Heart right ventricle (tissue), 16 donors: ENCODE measurements at regions of chr9 and their contacts with region 1.

Region 1: DNA sequence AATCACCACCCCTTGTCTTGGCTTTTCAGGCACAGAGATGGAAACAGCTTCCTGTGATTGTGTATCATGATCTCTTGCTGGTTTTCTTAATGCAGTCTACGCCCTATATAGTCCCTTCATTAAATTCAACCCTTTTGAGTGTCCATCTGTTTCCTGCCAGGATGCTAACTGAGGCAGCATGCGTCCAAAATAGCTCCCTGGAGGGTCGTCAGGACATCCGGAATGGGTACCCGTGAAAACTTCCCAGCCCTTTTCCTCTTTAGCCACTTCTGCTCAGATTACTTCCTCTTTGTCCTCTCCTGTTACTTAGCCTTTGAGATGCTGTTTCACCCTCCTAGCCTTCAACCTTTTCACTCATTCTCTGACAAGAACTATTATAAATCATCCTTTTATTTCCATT is 79.8 kb upstream of the KLF9 start:
- DNase-seq: peak in 1 of 2 donors; percentile 40
- ATAC-seq: peak in 7 of 8 donors; percentile 36 to 71 (median 46)
- H3K4me3 ChIP-seq: no peak overlapping the region
- H3K27ac ChIP-seq: peak overlapping the region in 9 of 10 donors; percentile 9 to 75 (median 55)
- H3K4me1 ChIP-seq: peaks cover 15 to 55% (median 41%) of the 10 kb centered on the region in 9 donors
- H3K27me3 ChIP-seq: no peaks in the 10 kb centered on the region
- CTCF ChIP-seq: no peak

Region 2: DNA sequence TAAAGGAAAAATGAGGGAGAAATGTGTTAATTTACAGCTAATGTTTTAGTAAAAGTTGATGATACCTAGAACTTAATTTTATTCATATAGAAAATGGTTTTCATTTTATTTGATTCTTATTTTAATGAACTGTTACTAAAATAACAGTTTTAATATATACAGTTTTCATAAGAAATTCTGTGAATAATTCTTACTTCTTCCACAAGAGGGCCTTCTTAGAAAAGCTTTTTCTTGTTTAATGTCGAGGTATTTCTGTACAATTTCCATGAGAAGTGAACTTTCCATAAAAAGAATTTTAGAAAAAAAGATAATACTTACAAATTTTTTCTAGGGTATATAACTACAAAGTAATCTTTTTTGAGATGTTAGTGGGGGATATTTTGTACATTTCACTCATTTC is 153.6 kb before region 1 on chr9:
- intact Hi-C with region 1: loop called in 1 of 10 experiments (anchors 5 kb)
- DNase-seq: no peak
- ATAC-seq: no peak
- H3K4me3 ChIP-seq: no peak overlapping the region
- H3K27ac ChIP-seq: no peak overlapping the region
- H3K4me1 ChIP-seq: peaks cover 0 to 8% (median 0%) of the 10 kb centered on the region in 9 donors
- H3K27me3 ChIP-seq: no peaks in the 10 kb centered on the region
- CTCF ChIP-seq: peak in 7 of 9 donors; percentile 48 to 71 (median 66)

Region 3: GRCh38 chr9:70352802-70353201 is 141.4 kb before region 1 on chr9:
- intact Hi-C with region 1: loop called in 7 of 10 experiments (anchors 5 to 10 kb)
- DNase-seq: no peak
- ATAC-seq: peak in 2 of 8 donors; percentile 36 to 57
- H3K4me3 ChIP-seq: no peak overlapping the region
- H3K27ac ChIP-seq: peak overlapping the region in 2 of 10 donors; percentile 3 to 16
- H3K4me1 ChIP-seq: peaks cover 0 to 33% (median 10%) of the 10 kb centered on the region in 9 donors
- H3K27me3 ChIP-seq: no peaks in the 10 kb centered on the region
- CTCF ChIP-seq: peak; percentile 48 to 89 (median 73)

Region 4: DNA sequence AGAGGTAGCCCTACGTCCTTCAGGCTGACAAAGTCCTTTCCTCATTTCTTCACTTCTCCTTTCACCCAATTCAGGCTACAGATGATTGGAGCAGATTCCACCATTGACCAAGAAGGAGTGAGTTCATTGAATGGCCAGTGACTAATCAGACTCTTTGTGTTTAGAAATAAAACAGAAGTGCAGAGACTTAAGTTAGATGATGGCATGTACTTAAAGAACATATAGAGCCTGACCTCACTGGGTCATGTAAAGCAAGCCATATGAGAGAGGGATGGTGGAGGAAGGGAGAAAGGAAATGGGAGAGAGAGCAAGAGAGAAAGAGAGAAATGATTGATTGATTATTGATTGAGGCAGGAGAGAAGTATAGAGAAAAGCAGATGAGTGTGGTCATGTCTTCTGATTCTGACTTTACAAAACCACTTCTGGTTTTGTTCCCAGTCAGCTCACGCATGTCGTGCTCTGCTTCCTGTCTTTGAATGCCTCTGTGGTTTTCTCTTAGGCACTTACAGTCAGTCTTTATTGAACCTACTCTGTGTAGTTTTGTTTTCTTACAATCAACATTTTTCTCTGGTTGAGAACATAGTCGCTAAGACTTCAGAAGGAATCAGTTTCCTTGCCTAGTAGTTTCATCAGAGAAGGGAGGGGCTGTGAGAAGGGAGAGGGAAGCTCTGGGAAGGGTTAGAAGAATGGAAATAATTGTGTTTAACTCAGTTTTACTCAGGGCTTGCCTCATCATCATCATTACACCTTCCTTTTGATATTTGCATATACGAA is 69.4 kb after region 1 on chr9:
- intact Hi-C with region 1: loop called in 1 of 10 experiments (anchors 10 kb)
- DNase-seq: no peak
- ATAC-seq: peak in 7 of 8 donors; percentile 32 to 79 (median 66)
- H3K4me3 ChIP-seq: no peak overlapping the region
- H3K27ac ChIP-seq: peak overlapping the region in 6 of 10 donors; percentile 1 to 91 (median 24)
- H3K4me1 ChIP-seq: peaks cover 0 to 39% (median 0%) of the 10 kb centered on the region in 9 donors
- H3K27me3 ChIP-seq: no peaks in the 10 kb centered on the region
- CTCF ChIP-seq: no peak

Region 5: DNA sequence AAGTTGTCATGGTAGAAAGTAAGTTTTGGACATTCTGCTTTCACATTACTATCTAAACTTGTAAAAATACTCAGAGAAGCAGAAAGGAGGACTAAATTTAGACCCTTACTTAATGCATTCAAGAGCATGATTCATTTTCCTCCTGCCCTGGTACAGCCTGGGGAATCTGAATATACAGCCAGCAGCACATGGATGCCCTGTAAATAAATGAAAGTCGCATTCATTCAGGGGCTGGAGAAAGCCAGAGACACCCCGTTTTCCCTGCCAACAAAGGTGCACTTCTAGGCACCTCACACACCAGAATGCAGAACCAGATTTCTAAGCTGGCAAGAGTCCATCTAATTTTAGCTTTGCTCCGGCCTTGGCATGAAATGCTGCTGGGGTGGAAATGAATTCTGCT is 93.0 kb after region 1 on chr9:
- intact Hi-C with region 1: loop called in 4 of 10 experiments (anchors 5 to 10 kb)
- DNase-seq: peak in 1 of 2 donors; percentile 36
- ATAC-seq: peak; percentile 65 to 89 (median 80)
- H3K4me3 ChIP-seq: no peak overlapping the region
- H3K27ac ChIP-seq: peak overlapping the region; percentile 69 to 91 (median 80)
- H3K4me1 ChIP-seq: peaks cover 22 to 64% (median 58%) of the 10 kb centered on the region in 9 donors
- H3K27me3 ChIP-seq: no peaks in the 10 kb centered on the region
- CTCF ChIP-seq: no peak

Region 6: DNA sequence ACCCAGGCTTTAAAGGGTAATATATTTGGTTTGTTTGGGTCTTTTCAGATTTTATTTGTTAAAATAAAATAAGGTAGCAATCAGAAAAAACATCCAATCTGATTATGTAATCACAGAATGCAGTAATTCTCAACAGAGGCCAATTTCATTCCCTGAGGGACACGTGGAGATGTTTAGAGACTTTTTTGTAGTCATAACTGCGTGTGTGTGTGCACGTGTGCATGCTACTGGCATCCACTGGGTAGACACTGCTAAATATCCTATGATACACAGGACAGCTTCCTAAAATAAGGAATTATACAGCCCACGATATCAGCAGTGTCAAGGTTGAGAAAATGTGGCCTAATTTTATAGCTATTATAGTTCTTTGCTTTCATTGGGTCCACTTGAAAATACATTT is 101.0 kb after region 1 on chr9:
- intact Hi-C with region 1: loop called in 2 of 10 experiments (anchors 5 to 10 kb)
- DNase-seq: no peak
- ATAC-seq: peak in 1 of 8 donors; percentile 26
- H3K4me3 ChIP-seq: no peak overlapping the region
- H3K27ac ChIP-seq: peak overlapping the region in 5 of 10 donors; percentile 3 to 62 (median 32)
- H3K4me1 ChIP-seq: peaks cover 0 to 29% (median 11%) of the 10 kb centered on the region in 9 donors
- H3K27me3 ChIP-seq: no peaks in the 10 kb centered on the region
- CTCF ChIP-seq: no peak